Activated T-helper 1 cell treated with anti-CD3 and anti-CD28 coated beads, Interleukin-12 subunit alpha, Interleukin-12 subunit beta, Interleukin-2, Interleukin-4 antibody, amounts not matched to agents 30 ng/mL and 10 ng/mL and 1 ng/mL, durations not matched to agents 14 hours and 24 hours and 36 hours (primary cell): ENCODE measurements at regions of chr22 and their contacts with region 1.

Region 1: DNA sequence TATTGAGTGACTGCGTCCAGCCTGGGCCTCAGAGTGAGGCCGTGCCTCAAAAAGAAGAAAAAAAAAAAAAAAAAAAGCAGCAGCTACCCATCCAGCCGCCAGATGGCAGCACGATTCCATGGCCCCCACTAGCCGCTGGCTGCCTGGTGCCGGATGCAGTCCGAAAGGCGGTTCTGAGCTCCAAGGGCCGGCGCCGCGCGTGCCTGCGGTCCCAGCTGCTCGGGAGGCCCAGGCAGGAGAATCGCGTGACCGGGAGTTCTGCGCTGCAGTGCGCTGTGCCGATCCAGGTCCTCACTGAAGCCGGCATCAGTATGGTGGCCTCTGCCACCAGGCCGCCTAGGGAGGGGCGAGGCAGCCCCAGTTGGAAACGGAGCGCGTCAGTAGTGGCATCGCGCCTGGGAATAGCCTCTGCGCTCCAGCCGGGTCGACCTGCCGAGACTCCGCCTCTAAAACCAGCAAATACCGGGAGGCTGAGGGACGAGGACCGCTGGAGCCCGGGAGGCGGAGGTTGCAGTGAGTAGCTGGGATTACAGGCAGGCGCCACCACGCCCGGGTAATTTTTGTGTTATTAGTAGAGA is 19.3 kb downstream of the SCARF2 start:
- DNase-seq: peak; percentile 58
- H3K4me3 Mint-ChIP-seq: no peak overlapping the region
- H3K27ac Mint-ChIP-seq: no peak overlapping the region
- H3K4me1 Mint-ChIP-seq: no peaks in the 10 kb centered on the region
- H3K27me3 Mint-ChIP-seq: peaks cover 12% of the 10 kb centered on the region

Region 2: GRCh38 chr22:20164863-20165262 is 253.4 kb before region 1 on chr22:
- intact Hi-C with region 1: no loop called
- DNase-seq: no peak
- H3K4me3 Mint-ChIP-seq: no peak overlapping the region
- H3K27ac Mint-ChIP-seq: no peak overlapping the region
- H3K4me1 Mint-ChIP-seq: no peaks in the 10 kb centered on the region
- H3K27me3 Mint-ChIP-seq: no peaks in the 10 kb centered on the region

Region 3: GRCh38 chr22:20295262-20296064 is 122.8 kb before region 1 on chr22:
- intact Hi-C with region 1: no loop called
- DNase-seq: no peak
- H3K4me3 Mint-ChIP-seq: no peak overlapping the region
- H3K27ac Mint-ChIP-seq: no peak overlapping the region
- H3K4me1 Mint-ChIP-seq: no peaks in the 10 kb centered on the region
- H3K27me3 Mint-ChIP-seq: peaks cover 13% of the 10 kb centered on the region

Region 4: GRCh38 chr22:20456064-20456721 is 37.9 kb after region 1 on chr22:
- intact Hi-C with region 1: loop called (anchors 1 kb)
- DNase-seq: peak; percentile 66
- H3K4me3 Mint-ChIP-seq: no peak overlapping the region
- H3K27ac Mint-ChIP-seq: peak overlapping the region; percentile 40
- H3K4me1 Mint-ChIP-seq: peaks cover 14% of the 10 kb centered on the region
- H3K27me3 Mint-ChIP-seq: peaks cover 3% of the 10 kb centered on the region

Region 5: DNA sequence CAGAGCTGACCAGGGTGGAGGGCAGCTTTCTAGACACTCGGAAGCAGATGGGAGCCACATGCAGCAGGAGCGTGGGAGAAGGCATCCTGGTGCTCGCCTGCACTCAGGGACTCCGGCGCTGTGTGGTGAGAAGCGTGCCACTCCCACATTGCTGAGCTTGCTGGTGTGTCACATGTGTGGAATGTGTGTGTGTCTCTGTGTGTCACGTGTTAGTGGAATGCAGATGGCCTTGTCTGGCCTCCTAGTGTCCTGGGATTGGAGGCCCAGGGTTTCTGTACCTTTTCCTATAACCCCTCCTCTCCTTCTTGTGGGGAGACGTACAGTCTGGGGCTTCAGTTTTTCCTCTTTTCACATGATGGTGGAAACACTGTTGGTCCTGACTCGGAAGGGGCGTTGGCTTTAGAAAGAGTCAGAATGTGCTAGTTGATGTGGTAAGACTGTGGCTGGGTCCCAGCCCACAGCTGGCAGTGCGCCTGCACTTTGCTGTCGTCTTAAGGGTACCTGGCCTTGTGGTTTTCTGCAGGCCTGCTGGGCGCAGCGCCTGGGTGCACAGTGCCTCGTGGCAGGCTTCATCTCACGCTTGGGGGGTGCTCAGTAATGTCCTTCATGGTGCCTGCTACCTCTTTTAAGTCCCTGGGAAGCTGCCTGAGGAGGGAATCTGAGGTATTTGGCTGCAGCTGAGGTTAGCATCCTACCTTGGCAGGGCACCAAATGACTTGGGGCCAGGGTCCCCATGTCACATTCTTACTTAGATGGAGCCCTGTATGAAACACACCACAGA is 150.9 kb after region 1 on chr22:
- intact Hi-C with region 1: loop called (anchors 2 kb)
- DNase-seq: peak; percentile 76
- H3K4me3 Mint-ChIP-seq: peak overlapping the region; percentile 53
- H3K27ac Mint-ChIP-seq: peak overlapping the region; percentile 69
- H3K4me1 Mint-ChIP-seq: peaks cover 66% of the 10 kb centered on the region
- H3K27me3 Mint-ChIP-seq: no peaks in the 10 kb centered on the region

Region 6: DNA sequence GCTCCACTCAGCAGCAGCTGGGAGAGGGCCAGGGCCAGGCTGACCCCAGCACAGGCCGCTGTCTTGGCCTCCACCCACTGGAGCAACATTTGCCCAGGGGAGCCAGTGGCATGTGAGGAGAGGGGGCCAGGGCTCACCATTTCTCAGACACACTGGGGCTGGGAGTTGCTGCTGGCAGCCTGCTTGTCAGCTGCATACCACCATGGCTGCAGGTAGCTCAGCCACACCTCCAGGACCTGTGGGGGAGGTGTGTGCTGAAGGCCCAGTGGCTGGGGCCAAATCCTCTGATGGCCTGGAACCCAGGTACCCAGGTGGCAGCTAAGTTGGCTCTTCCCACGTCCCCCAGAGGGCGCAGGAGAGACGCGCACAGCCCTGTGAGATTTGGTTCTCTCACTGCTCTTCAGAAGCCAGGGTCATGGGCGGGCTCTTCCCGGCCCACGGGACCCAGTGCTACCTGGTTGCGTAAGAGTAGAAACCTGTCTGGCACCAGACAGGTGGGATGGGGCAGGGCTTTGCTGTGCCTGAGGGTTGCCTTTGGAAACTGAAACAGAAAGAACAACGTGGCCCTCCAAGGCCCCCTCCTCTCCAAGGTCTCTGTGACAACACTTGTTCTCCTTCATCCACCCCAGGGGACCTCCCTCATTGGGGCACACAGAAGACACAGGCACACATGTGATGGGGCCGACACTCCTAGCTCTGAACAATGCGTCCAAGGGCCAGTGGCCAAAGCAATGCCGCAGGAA is 187.9 kb after region 1 on chr22:
- intact Hi-C with region 1: loop called (anchors 2 kb)
- DNase-seq: peak; percentile 42
- H3K4me3 Mint-ChIP-seq: no peak overlapping the region
- H3K27ac Mint-ChIP-seq: no peak overlapping the region
- H3K4me1 Mint-ChIP-seq: no peaks in the 10 kb centered on the region
- H3K27me3 Mint-ChIP-seq: peaks cover 4% of the 10 kb centered on the region

Region 7: DNA sequence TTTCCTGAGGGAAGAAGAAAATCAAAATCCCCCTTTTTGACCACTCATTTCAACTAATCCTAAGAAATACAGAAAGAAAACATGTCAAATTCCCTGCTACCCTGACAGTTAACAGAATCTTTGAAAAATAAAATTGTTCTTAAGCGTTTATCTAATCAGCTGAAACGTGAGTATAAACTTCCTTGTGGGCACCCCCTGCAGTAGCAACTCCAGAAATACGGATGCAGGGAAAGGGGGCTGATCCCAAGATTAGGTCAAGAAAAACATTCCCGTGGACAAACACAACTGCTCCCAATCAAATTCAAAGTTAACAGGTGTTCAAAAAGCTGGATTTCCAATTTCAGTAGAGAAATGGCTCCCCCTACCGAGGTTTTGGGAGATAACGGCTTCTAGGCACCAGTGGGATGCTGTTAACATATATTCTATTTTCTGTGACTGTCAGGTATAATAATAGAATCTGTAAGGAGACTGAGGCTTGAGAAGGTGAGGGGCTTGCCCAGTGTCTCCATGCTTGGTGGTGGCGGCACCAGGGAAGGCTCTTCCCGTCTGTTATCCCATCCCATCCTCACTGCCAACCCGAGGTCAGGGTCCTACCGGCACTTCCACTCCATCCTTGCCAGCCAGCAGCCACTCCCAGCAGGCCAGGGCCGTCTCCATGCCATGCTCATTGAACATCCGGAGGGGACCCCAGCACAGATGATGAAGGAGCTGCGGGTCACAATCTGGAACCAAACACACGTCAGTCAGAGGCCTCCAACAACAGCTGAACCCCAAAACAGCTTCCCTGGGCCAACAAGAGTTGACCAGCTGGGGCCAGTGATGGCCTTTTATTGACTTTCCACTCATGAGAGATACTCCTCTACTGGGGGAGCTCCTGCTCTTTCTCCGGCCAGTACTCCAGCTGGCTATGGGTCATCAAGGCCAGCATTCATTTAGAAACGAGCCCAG is 323.6 kb after region 1 on chr22:
- intact Hi-C with region 1: loop called (anchors 2 kb)
- DNase-seq: peak; percentile 15
- H3K4me3 Mint-ChIP-seq: no peak overlapping the region
- H3K27ac Mint-ChIP-seq: no peak overlapping the region
- H3K4me1 Mint-ChIP-seq: peaks cover 9% of the 10 kb centered on the region
- H3K27me3 Mint-ChIP-seq: no peaks in the 10 kb centered on the region

Region 8: GRCh38 chr22:20858615-20859416 is 440.5 kb after region 1 on chr22 and contains the starts of genes PI4KA and SNAP29:
- intact Hi-C with region 1: no loop called
- DNase-seq: peak; percentile 97
- H3K4me3 Mint-ChIP-seq: peak within 1 kb of the TSS; percentile 85
- H3K27ac Mint-ChIP-seq: peak within 1 kb of the TSS; percentile 88
- H3K4me1 Mint-ChIP-seq: peaks cover 51% of the 10 kb centered on the region
- H3K27me3 Mint-ChIP-seq: peaks cover 2% of the 10 kb centered on the region
- total RNA-seq, gene PI4KA: 80.4 and 84.7 TPM in 2 replicates
- total RNA-seq, gene SNAP29: 24.6 and 27.7 TPM in 2 replicates